ENCODE measurements at regions of chr12 and their contacts with region 1.

Region 1: DNA sequence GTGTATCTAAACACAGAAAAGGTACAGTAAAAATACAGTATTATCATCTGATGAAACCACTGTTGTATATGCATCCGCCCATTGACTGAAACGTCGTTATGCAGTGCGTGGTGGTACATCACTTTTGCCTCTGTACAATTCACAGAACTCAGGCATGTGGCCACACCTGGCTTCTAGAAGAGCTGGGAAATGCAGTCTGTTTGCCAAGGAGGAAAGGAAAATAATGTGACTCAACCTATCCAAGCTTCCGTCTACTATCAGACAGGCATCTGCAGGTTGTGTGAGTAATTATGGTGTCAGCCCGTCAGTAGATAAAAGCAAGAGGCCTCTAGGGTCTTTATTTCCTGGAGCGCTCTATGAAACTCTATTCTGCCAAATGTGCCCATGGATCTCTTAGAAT is 111.6 kb downstream of the BBS10 start:
- DNase-seq: no peak
- H3K4me3 Mint-ChIP-seq: no peak overlapping the region
- H3K27ac Mint-ChIP-seq: no peak overlapping the region
- H3K4me1 Mint-ChIP-seq: peaks cover 6% of the 10 kb centered on the region
- H3K27me3 Mint-ChIP-seq: peaks cover 2% of the 10 kb centered on the region

Region 2: GRCh38 chr12:75900781-75901254 is 335.8 kb before region 1 on chr12:
- intact Hi-C with region 1: no loop called
- DNase-seq: no peak
- H3K4me3 Mint-ChIP-seq: no peak overlapping the region
- H3K27ac Mint-ChIP-seq: no peak overlapping the region
- H3K4me1 Mint-ChIP-seq: no peaks in the 10 kb centered on the region
- H3K27me3 Mint-ChIP-seq: peaks cover 26% of the 10 kb centered on the region

Region 3: GRCh38 chr12:76277480-76277879 is 40.9 kb after region 1 on chr12:
- intact Hi-C with region 1: loop called (anchors 5 kb)
- DNase-seq: no peak
- H3K4me3 Mint-ChIP-seq: no peak overlapping the region
- H3K27ac Mint-ChIP-seq: no peak overlapping the region
- H3K4me1 Mint-ChIP-seq: peaks cover 14% of the 10 kb centered on the region
- H3K27me3 Mint-ChIP-seq: peaks cover 9% of the 10 kb centered on the region

Measured in activated T-helper 2 cell treated with anti-CD3 and anti-CD28 coated beads, Interferon-gamma antibody, Interleukin-2, Interleukin-4, amounts not matched to agents 10 μg/mL and 5 μg/mL and 100 μg/mL, durations not matched to agents 14 hours and 24 hours and 36 hours (primary cell).